ENCODE measurements at regions of chr13 and their contacts with region 1.

Region 1: GRCh38 chr13:44577236-44578066 is 1.3 kb upstream of the TSC22D1 start:
- DNase-seq: peak; percentile 97 to 98 (median 98)
- ATAC-seq: peak; percentile 92 to 94 (median 92)
- H3K4me3 ChIP-seq: peak overlapping the region; percentile 72 to 98 (median 94)
- H3K27ac ChIP-seq: peak overlapping the region; percentile 92 to 99 (median 97)
- H3K4me1 ChIP-seq: peaks cover 0 to 43% (median 36%) of the 10 kb centered on the region in 12 donors
- H3K27me3 ChIP-seq: no peaks in the 10 kb centered on the region
- CTCF ChIP-seq: no peak
- POLR2A ChIP-seq: peak in 1 of 2 donors; percentile 74

Region 2: GRCh38 chr13:44237276-44237767 is 340.1 kb before region 1 on chr13:
- intact Hi-C with region 1: no loop called
- DNase-seq: peak in 4 of 5 donors; percentile 81 to 86 (median 83)
- ATAC-seq: peak; percentile 98 to 99 (median 99)
- H3K4me3 ChIP-seq: peak overlapping the region in 1 of 12 donors; percentile 0
- H3K27ac ChIP-seq: peak overlapping the region; percentile 79 to 97 (median 88)
- H3K4me1 ChIP-seq: peaks cover 14 to 38% (median 26%) of the 10 kb centered on the region in 12 donors
- H3K27me3 ChIP-seq: no peaks in the 10 kb centered on the region
- CTCF ChIP-seq: no peak
- POLR2A ChIP-seq: peak in 1 of 2 donors; percentile 49

Region 3: GRCh38 chr13:44373601-44374348 is 203.7 kb before region 1 on chr13 and contains the start of gene SERP2:
- intact Hi-C with region 1: no loop called
- DNase-seq: peak; percentile 36 to 70 (median 53)
- ATAC-seq: peak; percentile 43 to 84 (median 80)
- H3K4me3 ChIP-seq: peak within 1 kb of the TSS; percentile 37 to 95 (median 68)
- H3K27ac ChIP-seq: peak within 1 kb of the TSS; percentile 2 to 80 (median 50)
- H3K4me1 ChIP-seq: peaks cover 0 to 21% (median 7%) of the 10 kb centered on the region in 12 donors
- H3K27me3 ChIP-seq: peaks cover 0 to 18% (median 0%) of the 10 kb centered on the region in 9 donors
- CTCF ChIP-seq: peak in 1 of 12 donors; percentile 4
- POLR2A ChIP-seq: no peak
- total RNA-seq, gene SERP2: 9.6 to 16.5 (median 12.8) TPM

Region 4: DNA sequence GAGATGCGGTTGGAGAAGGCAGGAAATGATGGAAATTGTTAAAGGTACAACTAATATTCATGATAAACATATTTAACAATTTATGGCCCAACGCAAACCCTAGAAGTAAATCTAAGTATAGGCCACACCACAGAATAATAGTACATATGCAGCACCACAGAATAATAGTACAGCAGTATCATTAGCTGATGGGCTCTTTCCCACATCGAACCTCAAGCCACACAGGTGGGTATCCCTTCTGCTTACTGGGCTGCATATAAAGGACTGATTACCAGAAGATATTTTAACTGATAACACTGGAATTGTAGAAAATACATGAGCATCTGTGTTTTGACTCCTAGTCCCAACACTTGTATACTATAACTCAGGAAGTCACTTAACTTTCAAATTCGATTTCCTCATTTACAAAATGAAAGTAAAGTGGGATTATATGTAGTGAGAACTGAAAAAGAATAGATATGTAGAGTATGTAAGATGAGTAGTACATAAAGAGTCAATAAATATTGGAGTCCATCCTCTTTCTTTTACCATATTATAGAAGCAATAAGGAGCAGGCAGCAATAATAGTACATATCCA is 92.8 kb before region 1 on chr13:
- intact Hi-C with region 1: loop called in 8 of 10 experiments (anchors 5 to 10 kb)
- DNase-seq: no peak
- ATAC-seq: no peak
- H3K4me3 ChIP-seq: peak overlapping the region in 7 of 12 donors; percentile 7 to 24 (median 18)
- H3K27ac ChIP-seq: peak overlapping the region in 2 of 12 donors; percentile 7 to 9
- H3K4me1 ChIP-seq: peaks cover 0 to 20% (median 9%) of the 10 kb centered on the region in 12 donors
- H3K27me3 ChIP-seq: no peaks in the 10 kb centered on the region
- CTCF ChIP-seq: no peak
- POLR2A ChIP-seq: no peak

Region 5: DNA sequence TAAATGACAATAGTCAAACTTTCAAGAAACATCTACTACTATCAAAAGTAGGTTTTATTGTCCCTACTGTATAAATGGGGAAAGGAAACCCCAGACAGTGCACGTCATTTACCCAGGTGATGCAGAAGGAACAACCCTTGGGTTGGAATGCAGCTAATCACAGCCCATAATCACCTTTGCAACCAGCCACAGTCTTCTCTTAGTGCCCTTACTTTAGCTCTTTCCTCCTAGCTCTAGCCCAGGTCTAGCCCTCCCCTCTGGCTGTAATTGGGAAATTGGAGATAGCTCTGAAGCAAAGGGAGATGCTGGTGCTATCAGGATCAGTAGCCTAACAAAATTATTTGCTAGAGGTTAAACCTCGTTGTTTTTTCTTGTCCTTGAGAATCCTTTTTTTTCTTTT is 24.1 kb after region 1 on chr13:
- intact Hi-C with region 1: no loop called
- DNase-seq: no peak
- ATAC-seq: no peak
- H3K4me3 ChIP-seq: no peak overlapping the region
- H3K27ac ChIP-seq: no peak overlapping the region
- H3K4me1 ChIP-seq: no peaks in the 10 kb centered on the region
- H3K27me3 ChIP-seq: no peaks in the 10 kb centered on the region
- CTCF ChIP-seq: no peak
- POLR2A ChIP-seq: no peak

Region 6: DNA sequence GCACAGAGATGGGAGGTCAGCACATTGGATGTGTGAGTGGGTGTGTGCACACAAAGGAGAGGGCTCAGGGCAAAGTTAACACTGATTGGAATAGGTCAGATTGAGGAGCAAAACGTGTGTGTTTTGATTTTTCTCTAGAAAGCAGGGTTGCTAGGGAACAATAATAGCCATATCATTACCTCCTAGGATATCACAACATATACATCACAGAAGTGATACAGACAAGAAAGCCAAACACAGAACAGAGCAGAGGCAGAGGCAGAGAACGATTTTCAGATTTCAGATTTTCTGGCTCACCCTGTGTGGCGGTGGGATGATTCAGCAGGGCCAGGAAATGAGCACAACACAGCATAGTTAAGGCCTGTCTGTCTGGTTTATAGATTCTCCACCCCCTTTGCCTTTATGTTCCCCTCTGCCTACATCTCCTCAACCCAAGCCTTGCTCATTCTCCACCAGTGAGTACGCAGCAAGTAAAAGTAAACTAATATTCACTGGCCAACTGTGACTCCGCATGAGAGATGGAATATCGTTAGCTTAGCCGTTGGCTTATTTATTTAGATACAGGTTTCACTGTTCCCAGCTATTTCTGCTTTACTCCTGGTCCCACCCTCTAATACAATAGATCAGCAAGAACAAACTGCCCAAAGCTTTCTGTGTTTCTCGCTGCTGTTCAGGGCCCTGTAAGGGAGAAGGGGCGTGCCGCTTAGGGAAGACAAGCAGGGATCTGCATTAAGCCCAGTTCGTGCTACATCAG is 181.4 kb after region 1 on chr13:
- intact Hi-C with region 1: loop called in 1 of 10 experiments (anchors 5 kb)
- DNase-seq: no peak
- ATAC-seq: no peak
- H3K4me3 ChIP-seq: no peak overlapping the region
- H3K27ac ChIP-seq: no peak overlapping the region
- H3K4me1 ChIP-seq: peaks cover 0 to 20% (median 5%) of the 10 kb centered on the region in 12 donors
- H3K27me3 ChIP-seq: no peaks in the 10 kb centered on the region
- CTCF ChIP-seq: no peak
- POLR2A ChIP-seq: no peak

Region 7: DNA sequence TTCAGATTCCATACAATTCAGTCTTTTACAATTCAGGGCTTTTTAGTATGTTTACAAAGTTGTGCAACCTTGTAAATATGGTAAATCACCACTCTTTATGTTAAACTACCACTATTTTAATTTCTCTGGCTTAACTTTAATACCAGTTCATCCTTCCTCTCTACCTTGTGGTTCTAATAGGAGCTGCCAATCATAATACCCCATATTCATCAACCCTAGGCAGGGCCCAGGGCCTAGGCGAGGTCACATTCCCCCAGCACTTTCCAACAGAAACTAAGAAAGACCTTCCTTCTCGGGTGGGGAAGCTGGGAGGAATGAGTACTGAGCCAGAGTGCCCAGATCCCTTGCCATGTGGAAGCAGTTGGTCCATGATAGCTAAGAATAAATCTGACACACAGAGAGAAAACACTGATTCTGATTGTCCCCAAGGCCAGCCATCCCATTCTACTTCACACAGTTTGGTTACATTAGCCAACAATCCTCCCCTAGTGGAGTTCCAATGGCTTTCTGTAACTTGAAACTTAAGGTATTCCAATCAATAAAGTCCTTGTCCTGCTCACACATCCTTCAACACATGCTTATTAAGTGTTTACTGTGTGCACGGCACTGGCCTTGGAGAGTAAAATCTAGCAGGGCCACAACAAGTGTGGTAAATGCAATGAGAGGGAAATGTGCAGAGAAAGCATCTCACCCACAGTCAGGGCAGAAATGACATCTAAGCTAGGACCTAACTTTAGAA is 335.0 kb after region 1 on chr13:
- intact Hi-C with region 1: loop called in 4 of 10 experiments (anchors 5 kb)
- DNase-seq: no peak
- ATAC-seq: no peak
- H3K4me3 ChIP-seq: no peak overlapping the region
- H3K27ac ChIP-seq: no peak overlapping the region
- H3K4me1 ChIP-seq: peaks cover 0 to 6% (median 0%) of the 10 kb centered on the region in 12 donors
- H3K27me3 ChIP-seq: no peaks in the 10 kb centered on the region
- CTCF ChIP-seq: no peak
- POLR2A ChIP-seq: no peak

Region 8: GRCh38 chr13:44969551-44970484 is 392.4 kb after region 1 on chr13:
- intact Hi-C with region 1: loop called in 3 of 10 experiments (anchors 5 to 10 kb)
- DNase-seq: no peak
- ATAC-seq: peak in 3 of 4 donors; percentile 58 to 70 (median 69)
- H3K4me3 ChIP-seq: no peak overlapping the region
- H3K27ac ChIP-seq: peak overlapping the region in 1 of 12 donors; percentile 20
- H3K4me1 ChIP-seq: peaks cover 0 to 24% (median 6%) of the 10 kb centered on the region in 12 donors
- H3K27me3 ChIP-seq: no peaks in the 10 kb centered on the region
- CTCF ChIP-seq: peak; percentile 69 to 92 (median 82)
- POLR2A ChIP-seq: no peak